ENCODE measurements at regions of chr17 and their contacts with region 1.

Region 1: GRCh38 chr17:4004517-4005295 is 40.5 kb upstream of the ATP2A3 start:
- DNase-seq: peak; percentile 32
- H3K4me3 Mint-ChIP-seq: no peak overlapping the region
- H3K27ac Mint-ChIP-seq: no peak overlapping the region
- H3K4me1 Mint-ChIP-seq: no peaks in the 10 kb centered on the region
- H3K27me3 Mint-ChIP-seq: no peaks in the 10 kb centered on the region

Region 2: DNA sequence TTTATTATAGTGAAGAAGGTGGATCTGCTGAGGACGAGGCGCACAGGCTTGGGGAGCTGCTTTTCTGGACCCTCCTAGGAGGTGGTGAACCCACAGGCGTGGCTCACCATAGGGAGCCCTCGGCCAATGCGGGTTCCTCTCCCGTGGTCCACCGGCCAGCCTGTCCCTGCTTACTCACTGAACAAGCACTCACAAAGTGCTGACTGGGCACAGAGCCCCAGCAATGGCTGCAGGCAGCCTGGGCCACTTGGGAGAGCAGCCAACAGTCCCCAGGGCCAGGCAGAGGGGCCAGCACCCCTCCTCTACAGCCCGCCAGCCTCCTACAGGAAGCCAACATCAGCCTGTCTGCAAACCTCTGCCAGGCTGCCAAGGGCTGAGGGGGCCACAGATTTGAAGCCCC is 139.5 kb before region 1 on chr17:
- intact Hi-C with region 1: loop called (anchors 1 kb)
- DNase-seq: no peak
- H3K4me3 Mint-ChIP-seq: no peak overlapping the region
- H3K27ac Mint-ChIP-seq: no peak overlapping the region
- H3K4me1 Mint-ChIP-seq: no peaks in the 10 kb centered on the region
- H3K27me3 Mint-ChIP-seq: no peaks in the 10 kb centered on the region